ENCODE measurements at regions of chr6 and their contacts with region 1.

Region 1: GRCh38 chr6:8400663-8401062 is 34.7 kb downstream of the SLC35B3 start:
- DNase-seq: no peak
- H3K4me3 Mint-ChIP-seq: no peak overlapping the region
- H3K27ac Mint-ChIP-seq: no peak overlapping the region
- H3K4me1 Mint-ChIP-seq: no peaks in the 10 kb centered on the region
- H3K27me3 Mint-ChIP-seq: no peaks in the 10 kb centered on the region

Region 2: DNA sequence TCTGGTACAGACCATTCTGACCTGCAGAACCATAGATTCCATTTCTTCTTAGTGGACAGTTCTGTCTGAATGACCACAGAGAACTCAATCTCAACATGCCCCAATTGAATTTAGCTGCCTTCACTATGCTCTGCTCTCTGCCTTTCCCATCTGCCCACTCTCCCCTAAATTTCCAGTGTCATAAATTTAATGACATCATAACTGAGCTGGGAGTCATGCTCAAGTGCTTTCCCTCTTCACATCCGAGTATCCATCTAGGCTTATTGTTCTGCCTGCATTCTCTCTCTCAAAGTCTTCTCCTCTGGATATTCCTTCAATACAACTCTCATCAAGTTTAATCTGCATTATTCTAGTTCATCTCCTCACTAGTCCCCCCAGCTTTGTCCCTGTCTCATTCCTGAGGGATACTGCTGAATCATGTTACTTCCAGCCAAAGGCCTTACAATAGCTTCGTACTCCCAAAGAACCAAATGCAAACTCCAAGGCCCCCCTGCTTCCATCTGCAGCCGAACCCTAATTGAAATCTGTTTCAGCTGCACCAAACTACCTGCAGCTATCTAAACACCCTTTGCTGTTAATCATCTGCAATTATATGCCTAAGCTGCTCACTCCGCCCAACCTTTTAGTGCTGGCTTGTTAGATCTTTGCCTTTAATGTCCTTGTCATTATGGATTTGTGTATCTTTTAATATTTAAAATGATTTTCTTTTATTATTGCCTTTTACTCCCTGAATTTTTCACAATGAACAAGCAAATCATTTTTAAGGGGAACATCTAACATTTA is 11.4 kb before region 1 on chr6:
- CTCF ChIA-PET with region 1: no interaction called
- intact Hi-C with region 1: loop called (anchors 1 kb)
- DNase-seq: no peak
- H3K4me3 Mint-ChIP-seq: no peak overlapping the region
- H3K27ac Mint-ChIP-seq: no peak overlapping the region
- H3K4me1 Mint-ChIP-seq: peaks cover 24% of the 10 kb centered on the region
- H3K27me3 Mint-ChIP-seq: no peaks in the 10 kb centered on the region